ENCODE measurements at regions of chr11 and their contacts with region 1.

Region 1: DNA sequence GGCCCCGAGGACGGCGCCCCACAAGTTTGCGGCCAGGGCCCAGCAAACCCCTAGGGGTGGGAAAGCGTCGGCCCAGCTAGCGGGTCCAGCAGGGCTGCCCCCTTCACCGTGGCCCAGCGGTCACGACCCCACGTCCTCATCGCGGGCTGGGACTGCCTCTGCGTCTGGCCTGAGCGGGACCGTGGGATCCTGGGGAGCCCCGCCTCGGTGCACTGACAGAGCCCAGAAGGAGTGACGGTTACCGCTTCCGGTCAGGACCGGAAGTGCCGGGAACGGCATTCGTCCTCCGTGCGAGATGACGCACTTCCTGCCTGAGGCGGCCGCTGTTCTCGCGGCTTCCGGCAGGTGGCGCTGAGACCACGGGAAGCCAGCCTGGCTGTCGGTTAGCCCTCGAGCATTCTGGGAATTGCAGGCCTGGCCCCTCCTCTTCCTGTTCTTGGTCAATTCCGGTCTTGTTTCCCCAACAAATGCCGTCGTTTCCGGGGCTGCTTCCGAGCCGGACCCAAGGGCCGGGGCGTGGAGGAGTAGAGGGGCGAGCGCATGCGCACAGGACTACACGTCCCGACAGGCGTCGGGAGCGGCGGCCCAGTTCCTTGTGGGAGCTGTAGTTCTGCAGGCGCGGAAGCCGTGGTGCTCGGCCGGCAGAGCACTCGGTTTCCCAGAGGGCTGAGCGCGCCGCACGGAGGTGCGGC is at the start of gene TSSC4:
- DNase-seq: peak; percentile 99
- ATAC-seq: peak; percentile 94
- H3K4me3 ChIP-seq: peak within 1 kb of the TSS; percentile 92
- H3K27ac ChIP-seq: peak within 1 kb of the TSS; percentile 89
- H3K4me1 ChIP-seq: peaks cover 10% of the 10 kb centered on the region
- H3K27me3 ChIP-seq: no peaks in the 10 kb centered on the region
- CTCF ChIP-seq: peak; percentile 99 to 100 (median 100); a peak in 5 of 6 replicates
- EP300 ChIP-seq: peak; percentile 39 to 64; a peak in 3 of 4 replicates
- POLR2A ChIP-seq: peak; percentile 93
- RAD21 ChIP-seq: peak; percentile 51
- polyA plus RNA-seq, gene TSSC4: 0.69 to 5.3 TPM

Region 2: DNA sequence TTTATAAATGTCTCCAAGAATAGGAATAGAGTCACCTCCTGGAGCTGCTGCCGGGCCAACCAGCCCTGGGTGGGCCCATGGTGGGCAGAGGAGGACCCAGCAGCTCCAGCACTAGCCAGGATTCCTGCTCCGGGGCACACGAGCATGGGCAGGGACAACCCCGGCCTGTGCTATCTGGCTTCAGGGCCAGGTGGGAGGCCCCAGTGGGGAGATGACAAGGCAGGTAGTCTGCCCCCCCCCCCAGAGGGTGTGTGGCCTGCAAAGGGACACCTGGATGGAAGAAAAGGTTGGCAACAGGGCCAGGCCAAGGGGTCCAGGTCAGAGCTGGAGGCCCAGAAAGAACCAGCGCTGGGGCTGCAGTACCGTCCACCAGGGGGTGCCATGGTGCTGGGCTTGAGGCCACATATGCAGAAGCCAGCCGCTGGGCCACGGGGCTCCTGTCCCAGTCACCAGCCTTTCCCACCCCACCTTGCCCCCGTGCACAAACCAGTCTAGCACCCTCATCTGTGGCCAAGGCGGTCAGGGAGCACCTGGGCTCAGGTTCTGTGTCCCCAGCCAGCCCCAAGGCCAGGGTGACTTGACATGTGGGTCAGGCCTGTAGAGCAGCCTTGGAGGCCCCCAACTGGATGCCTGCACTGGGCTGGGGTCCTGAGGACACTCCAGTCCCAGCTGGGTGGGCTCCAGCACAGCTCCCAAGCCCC is 94.9 kb before region 1 on chr11:
- CTCF ChIA-PET with region 1: interaction called, 37 read pairs
- POLR2A ChIA-PET with region 1: interaction called, 4 read pairs
- RAD21 ChIA-PET with region 1: interaction called, 18 read pairs
- SMC1A ChIA-PET with region 1: interaction called, 16 read pairs
- in situ Hi-C with region 1: no loop called
- intact Hi-C with region 1: loop called (anchors 1 kb)
- DNase-seq: peak; percentile 4
- ATAC-seq: peak; percentile 92
- H3K4me3 ChIP-seq: no peak overlapping the region
- H3K27ac ChIP-seq: no peak overlapping the region
- H3K4me1 ChIP-seq: no peaks in the 10 kb centered on the region
- H3K27me3 ChIP-seq: no peaks in the 10 kb centered on the region; a peak in 1 of 4 replicates
- CTCF ChIP-seq: peak; percentile 76 to 93 (median 84)
- EP300 ChIP-seq: no peak
- POLR2A ChIP-seq: no peak
- RAD21 ChIP-seq: peak; percentile 87

Region 3: GRCh38 chr11:2342981-2343380 is 57.2 kb before region 1 on chr11:
- CTCF ChIA-PET with region 1: no interaction called
- POLR2A ChIA-PET with region 1: no interaction called
- RAD21 ChIA-PET with region 1: no interaction called
- SMC1A ChIA-PET with region 1: no interaction called
- in situ Hi-C with region 1: no loop called
- intact Hi-C with region 1: no loop called
- DNase-seq: no peak
- ATAC-seq: no peak
- H3K4me3 ChIP-seq: no peak overlapping the region
- H3K27ac ChIP-seq: no peak overlapping the region
- H3K4me1 ChIP-seq: no peaks in the 10 kb centered on the region
- H3K27me3 ChIP-seq: no peaks in the 10 kb centered on the region
- CTCF ChIP-seq: no peak
- EP300 ChIP-seq: no peak
- POLR2A ChIP-seq: no peak
- RAD21 ChIP-seq: no peak

Region 4: DNA sequence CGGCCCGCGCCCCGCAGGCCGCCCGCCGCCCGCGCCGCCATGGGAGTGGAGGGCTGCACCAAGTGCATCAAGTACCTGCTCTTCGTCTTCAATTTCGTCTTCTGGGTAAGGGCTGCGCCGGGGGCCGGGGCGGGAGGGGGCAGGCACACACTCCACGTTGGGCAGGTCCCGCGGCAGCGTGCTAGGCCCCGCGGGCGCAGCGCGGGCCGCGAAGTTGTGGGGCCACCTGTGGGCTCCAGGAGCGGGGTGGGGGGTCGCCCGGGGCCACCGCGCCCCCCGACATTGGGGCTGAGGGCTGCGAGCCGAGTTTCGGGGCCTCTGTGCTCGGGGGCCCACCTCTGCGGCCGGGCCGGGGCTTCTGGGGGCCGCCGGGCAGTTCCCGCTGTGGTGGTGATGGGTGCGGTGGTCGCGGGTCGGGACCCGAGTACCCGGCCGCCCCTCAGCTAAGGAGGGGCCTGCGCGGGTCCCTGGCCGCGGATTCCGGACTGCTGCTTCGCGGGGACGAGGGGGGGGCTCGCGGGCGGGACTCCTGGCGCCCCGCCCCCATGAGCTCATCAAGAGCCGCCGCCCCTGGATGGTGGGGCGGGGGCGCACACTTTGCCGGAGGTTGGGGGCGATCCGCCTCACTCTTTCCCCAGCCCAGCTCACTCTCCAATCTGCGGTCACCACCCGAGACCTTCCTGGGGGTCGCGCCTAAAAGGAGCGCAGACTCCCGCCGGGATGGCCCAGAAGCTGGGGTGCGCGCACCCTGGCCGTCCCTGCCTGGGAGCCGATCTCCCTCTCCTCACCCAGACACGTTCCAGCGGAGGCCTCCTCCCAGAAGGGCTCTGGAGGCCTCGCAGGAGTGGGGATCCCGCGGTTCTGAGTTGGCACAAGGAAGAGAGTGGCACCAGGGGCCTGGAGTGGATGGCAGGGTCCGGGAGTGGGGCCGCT is 22.4 kb before region 1 on chr11:
- CTCF ChIA-PET with region 1: interaction called, 5 read pairs
- POLR2A ChIA-PET with region 1: interaction called, 9 read pairs
- RAD21 ChIA-PET with region 1: interaction called, 11 read pairs
- SMC1A ChIA-PET with region 1: interaction called, 6 read pairs
- in situ Hi-C with region 1: no loop called
- intact Hi-C with region 1: no loop called
- DNase-seq: no peak
- ATAC-seq: peak; percentile 53
- H3K4me3 ChIP-seq: peak overlapping the region; percentile 97
- H3K27ac ChIP-seq: peak overlapping the region; percentile 74
- H3K4me1 ChIP-seq: peaks cover 30% of the 10 kb centered on the region
- H3K27me3 ChIP-seq: no peaks in the 10 kb centered on the region
- CTCF ChIP-seq: no peak
- EP300 ChIP-seq: no peak
- POLR2A ChIP-seq: peak; percentile 64
- RAD21 ChIP-seq: no peak

Region 5: DNA sequence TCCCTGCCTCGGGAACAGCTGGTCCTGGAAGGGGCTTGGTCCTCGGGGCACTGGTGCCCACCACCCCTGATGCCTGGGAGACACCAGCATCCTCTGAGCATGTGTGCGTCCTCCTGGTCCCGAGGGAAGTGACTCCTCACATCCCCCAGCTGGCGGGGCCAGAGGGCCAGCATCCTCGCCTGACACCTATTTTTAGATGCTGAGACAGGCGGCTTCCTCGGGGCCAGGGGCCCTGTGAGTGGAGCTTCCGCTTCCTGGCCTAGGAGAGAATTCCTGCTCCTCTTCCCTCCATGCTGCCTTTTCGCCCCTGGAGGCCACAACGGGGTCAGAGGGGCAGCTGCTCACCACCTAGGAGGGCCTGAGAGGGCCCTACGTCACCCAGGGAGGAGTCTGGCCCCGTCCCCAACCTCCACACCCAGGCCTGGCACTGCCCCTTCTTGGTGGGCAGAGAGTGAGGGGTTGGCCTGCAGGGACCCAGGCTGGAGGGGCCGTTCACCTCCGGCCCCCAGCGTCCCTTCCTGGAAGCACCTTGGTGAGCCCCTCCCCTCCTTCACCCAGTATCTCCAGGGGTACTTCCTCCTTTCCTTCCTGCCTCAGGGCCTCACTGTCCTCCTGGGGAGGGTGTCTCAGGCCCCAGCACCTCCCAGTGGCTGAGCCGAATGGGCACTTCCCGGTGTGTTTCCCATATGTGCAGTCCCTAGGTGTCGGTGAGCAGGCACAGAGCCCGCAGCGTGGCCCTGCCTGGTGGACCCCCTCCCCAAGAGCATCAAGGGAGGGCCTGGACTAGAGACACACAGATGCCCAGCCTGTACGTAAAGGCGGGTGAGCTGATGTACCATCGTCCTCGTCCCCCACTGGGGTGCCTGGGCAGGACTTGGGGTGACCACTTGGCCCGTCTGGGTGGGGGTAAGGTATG is 17.0 kb before region 1 on chr11:
- CTCF ChIA-PET with region 1: interaction called, 23 read pairs
- POLR2A ChIA-PET with region 1: interaction called, 33 read pairs
- RAD21 ChIA-PET with region 1: interaction called, 15 read pairs
- SMC1A ChIA-PET with region 1: interaction called, 12 read pairs
- in situ Hi-C with region 1: no loop called
- intact Hi-C with region 1: no loop called
- DNase-seq: no peak
- ATAC-seq: peak; percentile 13
- H3K4me3 ChIP-seq: peak overlapping the region; percentile 45; the same call in 1 of the 2 replicates
- H3K27ac ChIP-seq: peak overlapping the region; percentile 62
- H3K4me1 ChIP-seq: peaks cover 80% of the 10 kb centered on the region
- H3K27me3 ChIP-seq: no peaks in the 10 kb centered on the region
- CTCF ChIP-seq: 0 out of 6 replicates have a peak, but pooled peaks of 1 of the 3 experiments have one; percentile 7
- EP300 ChIP-seq: no peak
- POLR2A ChIP-seq: no peak; the same call in 1 of the 2 replicates
- RAD21 ChIP-seq: no peak

Region 6: GRCh38 chr11:2586087-2586792 is 186.0 kb after region 1 on chr11:
- CTCF ChIA-PET with region 1: no interaction called
- POLR2A ChIA-PET with region 1: no interaction called
- RAD21 ChIA-PET with region 1: no interaction called
- SMC1A ChIA-PET with region 1: no interaction called
- in situ Hi-C with region 1: no loop called
- intact Hi-C with region 1: no loop called
- DNase-seq: no peak
- ATAC-seq: no peak
- H3K4me3 ChIP-seq: no peak overlapping the region
- H3K27ac ChIP-seq: no peak overlapping the region
- H3K4me1 ChIP-seq: no peaks in the 10 kb centered on the region
- H3K27me3 ChIP-seq: no peaks in the 10 kb centered on the region
- CTCF ChIP-seq: no peak
- EP300 ChIP-seq: no peak
- POLR2A ChIP-seq: no peak
- RAD21 ChIP-seq: no peak

Measured in GM12878 (cell line).